ENCODE measurements at regions of chr3 and their contacts with region 1.

Region 1: GRCh38 chr3:112734718-112735350 is 93.9 kb upstream of the CCDC80 start:
- DNase-seq: peak; percentile 51
- H3K4me3 Mint-ChIP-seq: no peak overlapping the region
- H3K27ac Mint-ChIP-seq: no peak overlapping the region
- H3K4me1 Mint-ChIP-seq: peaks cover 47% of the 10 kb centered on the region
- H3K27me3 Mint-ChIP-seq: no peaks in the 10 kb centered on the region

Region 2: GRCh38 chr3:112199619-112200316 is 535.1 kb before region 1 on chr3:
- intact Hi-C with region 1: no loop called
- DNase-seq: no peak
- H3K4me3 Mint-ChIP-seq: no peak overlapping the region
- H3K27ac Mint-ChIP-seq: no peak overlapping the region
- H3K4me1 Mint-ChIP-seq: no peaks in the 10 kb centered on the region
- H3K27me3 Mint-ChIP-seq: peaks cover 2% of the 10 kb centered on the region

Region 3: DNA sequence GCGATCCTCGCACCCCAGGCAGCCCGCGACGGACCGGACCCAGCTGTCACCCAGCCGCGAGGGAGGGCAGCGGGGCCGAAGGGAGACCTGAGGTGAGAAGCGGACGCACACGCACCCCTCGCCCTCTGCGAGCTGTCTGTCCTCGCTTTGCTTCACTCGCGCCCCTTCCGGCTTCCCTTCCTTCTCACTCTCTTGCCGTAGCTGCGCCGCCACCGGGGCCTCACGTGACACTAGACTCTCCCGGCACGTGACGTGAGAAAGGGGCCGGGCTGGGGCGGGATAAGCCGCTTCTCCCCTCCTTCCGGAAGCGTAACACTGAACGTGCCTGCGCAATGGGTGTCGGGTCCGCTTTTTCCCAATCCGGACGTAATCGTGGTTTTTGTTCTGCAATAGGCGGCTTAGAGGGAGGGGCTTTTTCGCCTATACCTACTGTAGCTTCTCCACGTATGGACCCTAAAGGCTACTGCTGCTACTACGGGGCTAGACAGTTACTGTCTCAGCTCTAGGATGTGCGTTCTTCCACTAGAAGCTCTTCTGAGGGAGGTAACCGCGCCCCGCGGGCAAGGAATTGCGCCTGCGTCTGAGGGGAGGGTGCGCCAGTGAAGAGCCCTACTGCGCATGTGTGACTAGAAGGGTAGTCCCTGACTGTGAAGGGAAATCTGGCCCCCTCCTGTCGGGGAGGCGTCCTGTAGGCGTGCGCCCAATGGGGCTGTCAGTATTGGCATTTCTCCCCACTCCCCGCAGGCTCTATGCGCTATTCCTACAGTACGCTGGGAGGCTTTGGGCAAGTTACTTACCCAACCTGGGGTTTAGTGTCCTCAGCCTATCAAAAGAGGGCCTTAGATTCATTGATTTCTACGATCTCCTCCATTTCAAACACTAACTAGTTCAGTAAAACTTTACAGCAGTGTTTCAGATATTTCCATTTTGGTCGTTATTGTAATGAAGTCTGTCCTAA is 172.8 kb before region 1 on chr3 and contains the starts of genes ATG3 and SLC35A5:
- intact Hi-C with region 1: loop called (anchors 5 kb)
- DNase-seq: peak; percentile 98
- H3K4me3 Mint-ChIP-seq: peak within 1 kb of the TSS; percentile 92
- H3K27ac Mint-ChIP-seq: peak within 1 kb of the TSS; percentile 99
- H3K4me1 Mint-ChIP-seq: peaks cover 49% of the 10 kb centered on the region
- H3K27me3 Mint-ChIP-seq: no peaks in the 10 kb centered on the region
- total RNA-seq, gene ATG3: 61.1 and 61.6 TPM in 2 replicates
- total RNA-seq, gene SLC35A5: 12.6 and 17.8 TPM in 2 replicates

Region 4: DNA sequence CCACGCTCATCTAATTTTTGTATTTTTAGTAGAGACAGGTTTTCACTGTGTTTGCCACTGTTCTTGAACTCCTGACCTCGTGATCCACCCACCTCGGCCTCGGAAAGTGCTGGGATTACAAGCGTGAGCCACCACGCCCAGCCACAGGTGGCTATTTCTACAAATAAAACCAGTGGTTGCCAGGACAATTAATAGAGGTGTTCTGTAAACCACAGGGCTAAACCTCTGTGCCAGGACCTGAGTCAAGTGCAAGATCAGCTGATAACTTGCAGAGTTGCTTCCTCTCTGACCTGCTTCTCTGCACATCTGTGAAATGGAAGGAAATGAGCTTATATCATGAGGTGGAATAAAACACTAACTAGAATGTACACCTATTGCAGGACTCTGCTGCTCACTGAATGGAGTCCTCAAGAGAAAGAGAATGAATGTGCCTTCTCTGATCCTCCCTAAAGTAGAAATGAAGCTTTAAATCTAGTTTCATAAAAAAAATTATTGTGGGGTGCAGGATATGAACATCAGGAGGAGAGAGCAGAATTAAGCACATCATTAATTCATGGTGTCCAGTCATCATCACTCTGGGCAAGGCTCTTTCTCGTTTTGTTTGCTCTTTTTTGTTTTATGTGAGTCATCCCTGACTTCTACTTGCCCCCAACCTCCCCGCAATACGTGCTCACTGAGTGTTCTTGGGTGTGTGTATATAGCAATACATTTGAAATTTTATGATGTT is 39.2 kb after region 1 on chr3:
- intact Hi-C with region 1: loop called (anchors 5 kb)
- DNase-seq: peak; percentile 13
- H3K4me3 Mint-ChIP-seq: no peak overlapping the region
- H3K27ac Mint-ChIP-seq: no peak overlapping the region
- H3K4me1 Mint-ChIP-seq: peaks cover 37% of the 10 kb centered on the region
- H3K27me3 Mint-ChIP-seq: peaks cover 2% of the 10 kb centered on the region

Region 5: GRCh38 chr3:112858410-112859069 is 123.7 kb after region 1 on chr3:
- intact Hi-C with region 1: loop called (anchors 5 kb)
- DNase-seq: no peak
- H3K4me3 Mint-ChIP-seq: peak overlapping the region; percentile 0
- H3K27ac Mint-ChIP-seq: peak overlapping the region; percentile 34
- H3K4me1 Mint-ChIP-seq: peaks cover 30% of the 10 kb centered on the region
- H3K27me3 Mint-ChIP-seq: no peaks in the 10 kb centered on the region

Region 6: DNA sequence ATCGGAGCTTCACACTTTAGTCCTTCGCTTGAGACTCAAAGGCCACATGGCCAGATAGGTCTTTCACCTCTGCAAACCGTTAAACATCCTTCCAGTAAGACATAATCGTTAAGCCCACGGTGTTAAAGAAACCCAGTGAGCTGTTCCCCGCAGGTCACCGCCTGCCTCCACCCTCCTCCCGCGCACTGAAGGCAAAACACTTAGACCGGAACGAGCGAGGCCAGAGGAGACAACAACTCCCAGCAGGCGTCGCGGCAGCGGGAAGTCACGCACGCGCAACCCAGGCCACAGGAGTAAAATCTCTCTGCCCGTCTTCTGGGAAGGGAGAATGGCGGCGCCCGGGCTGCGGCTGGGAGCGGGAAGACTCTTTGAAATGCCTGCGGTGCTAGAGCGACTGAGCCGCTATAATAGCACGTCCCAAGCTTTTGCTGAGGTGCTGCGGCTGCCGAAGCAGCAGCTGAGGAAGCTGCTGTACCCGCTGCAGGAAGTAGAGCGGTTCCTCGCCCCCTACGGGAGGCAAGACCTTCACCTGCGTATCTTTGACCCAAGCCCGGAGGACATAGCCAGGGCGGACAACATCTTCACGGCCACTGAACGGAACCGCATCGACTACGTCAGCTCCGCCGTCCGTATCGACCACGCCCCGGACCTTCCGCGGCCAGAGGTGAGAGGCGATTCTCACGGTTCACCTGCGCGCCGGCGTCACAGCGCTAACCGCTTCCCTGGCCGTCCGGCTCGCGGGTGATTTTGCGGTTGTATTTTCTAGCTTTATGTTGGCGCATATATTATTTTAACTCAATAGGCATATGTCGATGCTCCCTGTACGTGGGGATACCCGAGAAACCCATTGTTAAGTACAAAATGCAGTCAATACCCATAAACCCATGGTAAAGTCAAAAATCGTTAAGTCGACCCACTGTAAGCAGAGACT is 256.1 kb after region 1 on chr3 and contains the start of gene GTPBP8:
- intact Hi-C with region 1: loop called (anchors 5 kb)
- DNase-seq: peak; percentile 79
- H3K4me3 Mint-ChIP-seq: peak within 1 kb of the TSS; percentile 80
- H3K27ac Mint-ChIP-seq: peak within 1 kb of the TSS; percentile 84
- H3K4me1 Mint-ChIP-seq: peaks cover 49% of the 10 kb centered on the region
- H3K27me3 Mint-ChIP-seq: no peaks in the 10 kb centered on the region
- total RNA-seq, gene GTPBP8: 17.6 and 22.7 TPM in 2 replicates